ENCODE measurements at regions of chr10 and their contacts with region 1.

Region 1: GRCh38 chr10:27319752-27320561 is 79.4 kb upstream of the ACBD5 start:
- DNase-seq: peak; percentile 89
- H3K4me3 ChIP-seq: peak overlapping the region in 2 of 3 experiments; percentile 41 to 45
- H3K27ac ChIP-seq: peak overlapping the region; percentile 44
- H3K4me1 ChIP-seq: peaks cover 13% of the 10 kb centered on the region
- H3K27me3 ChIP-seq: no peaks in the 10 kb centered on the region
- CTCF ChIP-seq: no peak

Region 2: GRCh38 chr10:26621889-26622711 is 697.9 kb before region 1 on chr10:
- CTCF ChIA-PET with region 1: no interaction called
- dilution Hi-C with region 1: no loop called
- in situ Hi-C with region 1: loop called in 1 of 2 experiments (anchors 10 kb)
- intact Hi-C with region 1: loop called (anchors 5 kb)
- DNase-seq: peak; percentile 43
- H3K4me3 ChIP-seq: peak overlapping the region; percentile 33 to 48 (median 34)
- H3K27ac ChIP-seq: no peak overlapping the region
- H3K4me1 ChIP-seq: peaks cover 11% of the 10 kb centered on the region
- H3K27me3 ChIP-seq: no peaks in the 10 kb centered on the region
- CTCF ChIP-seq: no peak

Region 3: DNA sequence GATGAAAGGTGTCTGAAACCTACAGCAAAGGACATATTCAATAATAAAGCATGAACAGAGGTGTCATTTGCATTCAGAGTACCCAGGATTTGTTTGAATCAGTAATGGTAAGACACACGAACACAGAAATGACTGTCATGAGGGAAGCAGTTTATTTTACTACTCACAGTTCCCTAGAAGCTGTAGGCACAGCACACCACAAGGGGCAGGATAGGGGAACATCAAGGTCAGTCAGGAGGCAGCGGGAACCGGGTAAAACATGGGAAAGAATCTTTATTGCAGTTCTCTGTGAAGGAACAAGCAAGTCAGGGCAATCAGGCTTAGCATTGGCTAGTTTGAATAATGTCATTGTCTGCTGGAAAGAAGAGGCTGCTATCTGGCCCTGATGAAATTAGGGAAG is 692.6 kb before region 1 on chr10:
- CTCF ChIA-PET with region 1: no interaction called
- dilution Hi-C with region 1: no loop called
- in situ Hi-C with region 1: loop called in 1 of 2 experiments (anchors 10 kb)
- intact Hi-C with region 1: loop called (anchors 5 kb)
- DNase-seq: no peak
- H3K4me3 ChIP-seq: no peak overlapping the region
- H3K27ac ChIP-seq: no peak overlapping the region
- H3K4me1 ChIP-seq: peaks cover 3% of the 10 kb centered on the region
- H3K27me3 ChIP-seq: peaks cover 4% of the 10 kb centered on the region
- CTCF ChIP-seq: peak; percentile 4 to 22

Region 4: GRCh38 chr10:26805567-26806245 is 514.3 kb before region 1 on chr10:
- CTCF ChIA-PET with region 1: no interaction called
- dilution Hi-C with region 1: no loop called
- in situ Hi-C with region 1: no loop called
- intact Hi-C with region 1: no loop called
- DNase-seq: peak; percentile 37
- H3K4me3 ChIP-seq: no peak overlapping the region
- H3K27ac ChIP-seq: no peak overlapping the region
- H3K4me1 ChIP-seq: no peaks in the 10 kb centered on the region
- H3K27me3 ChIP-seq: no peaks in the 10 kb centered on the region
- CTCF ChIP-seq: no peak

Measured in mammary epithelial cell (primary cell).